Activated naive CD8-positive, alpha-beta T cell treated with anti-CD3 and anti-CD28 coated beads, Interleukin-2, amount 10 ng/mL, durations not matched to agents 7 days and 5 days (primary cell): ENCODE measurements at regions of chr12 and their contacts with region 1.

Region 1: GRCh38 chr12:6567112-6567670 is 900 bp downstream of the NOP2 start:
- DNase-seq: no peak
- ATAC-seq: no peak
- H3K4me3 Mint-ChIP-seq: peak overlapping the region; percentile 100
- H3K27ac Mint-ChIP-seq: peak overlapping the region; percentile 98
- H3K4me1 Mint-ChIP-seq: peaks cover 34% of the 10 kb centered on the region
- H3K27me3 Mint-ChIP-seq: no peaks in the 10 kb centered on the region

Region 2: DNA sequence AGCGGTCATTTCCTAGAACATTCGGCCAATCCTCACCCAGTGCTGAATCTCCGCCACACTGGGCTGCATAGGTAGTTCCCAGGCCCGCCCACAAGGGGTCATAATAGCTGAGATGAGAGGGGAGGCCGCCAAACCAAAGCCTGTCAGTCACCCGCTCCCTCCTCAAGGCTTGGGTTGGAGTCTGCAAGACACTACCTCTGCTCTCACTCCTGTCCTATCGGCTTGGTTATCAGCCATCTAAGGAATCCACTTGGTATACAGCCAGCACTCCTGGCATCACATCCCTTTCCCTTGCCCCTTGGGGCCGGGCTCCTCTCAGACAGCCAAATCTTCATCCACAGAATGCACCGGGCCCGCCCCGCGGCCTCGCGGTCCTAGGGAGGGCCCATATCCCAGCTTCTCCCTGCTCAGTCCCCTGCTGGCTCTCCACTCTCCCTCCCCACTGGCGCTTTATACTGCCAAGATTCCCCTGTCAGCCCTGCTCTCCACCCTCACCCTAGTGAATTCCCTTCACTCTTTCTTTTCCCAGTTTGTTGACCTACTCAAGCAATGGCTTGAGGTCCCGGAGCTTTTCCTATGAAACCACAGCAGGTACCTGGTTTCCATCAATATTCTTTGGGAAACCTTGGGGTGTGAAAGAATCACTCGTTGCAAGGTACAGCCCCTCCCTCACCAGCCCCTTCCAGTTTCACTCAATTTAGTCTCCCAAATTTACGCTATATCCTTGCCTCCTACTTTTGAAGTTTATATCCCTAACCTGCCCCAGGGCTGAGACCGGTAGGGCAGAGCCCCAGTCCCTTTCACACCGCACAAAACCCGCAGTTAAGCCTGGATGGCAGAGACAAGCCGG is 12.8 kb before region 1 on chr12:
- POLR2A ChIA-PET with region 1: interaction called, 10 read pairs
- DNase-seq: peak; percentile 73
- ATAC-seq: peak; percentile 38
- H3K4me3 Mint-ChIP-seq: peak overlapping the region; percentile 84
- H3K27ac Mint-ChIP-seq: peak overlapping the region; percentile 51
- H3K4me1 Mint-ChIP-seq: peaks cover 38% of the 10 kb centered on the region
- H3K27me3 Mint-ChIP-seq: no peaks in the 10 kb centered on the region